Heart right ventricle (tissue), 16 donors: ENCODE measurements at regions of chr2 and their contacts with region 1.

Region 1: GRCh38 chr2:148172131-148172753 is 151.4 kb downstream of the MBD5 start:
- DNase-seq: no peak
- ATAC-seq: peak in 1 of 8 donors; percentile 44
- H3K4me3 ChIP-seq: no peak overlapping the region
- H3K27ac ChIP-seq: no peak overlapping the region
- H3K4me1 ChIP-seq: no peaks in the 10 kb centered on the region
- H3K27me3 ChIP-seq: no peaks in the 10 kb centered on the region
- CTCF ChIP-seq: no peak

Region 2: DNA sequence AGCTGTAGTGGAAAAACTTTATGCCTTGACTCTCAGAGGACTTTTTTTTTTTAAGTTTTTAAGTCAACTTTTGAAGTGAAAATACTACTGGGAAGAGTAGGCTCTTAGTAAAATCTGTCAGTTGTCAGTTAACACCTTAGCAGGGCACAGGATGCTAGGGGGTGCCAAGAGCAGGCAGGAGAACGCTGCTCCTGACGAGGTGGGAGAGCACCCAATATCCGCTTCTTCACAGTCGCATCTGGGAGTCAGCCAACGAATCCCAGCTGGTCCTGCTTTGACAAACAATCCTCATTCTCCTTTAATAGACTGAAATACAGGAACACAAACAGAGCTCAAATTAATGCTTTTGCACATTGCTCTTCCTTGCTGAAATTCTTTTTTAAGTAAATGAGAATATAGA is 1036.9 kb before region 1 on chr2:
- intact Hi-C with region 1: loop called in 1 of 10 experiments (anchors 5 kb)
- DNase-seq: no peak
- ATAC-seq: no peak
- H3K4me3 ChIP-seq: no peak overlapping the region
- H3K27ac ChIP-seq: no peak overlapping the region
- H3K4me1 ChIP-seq: no peaks in the 10 kb centered on the region
- H3K27me3 ChIP-seq: no peaks in the 10 kb centered on the region
- CTCF ChIP-seq: no peak

Region 3: DNA sequence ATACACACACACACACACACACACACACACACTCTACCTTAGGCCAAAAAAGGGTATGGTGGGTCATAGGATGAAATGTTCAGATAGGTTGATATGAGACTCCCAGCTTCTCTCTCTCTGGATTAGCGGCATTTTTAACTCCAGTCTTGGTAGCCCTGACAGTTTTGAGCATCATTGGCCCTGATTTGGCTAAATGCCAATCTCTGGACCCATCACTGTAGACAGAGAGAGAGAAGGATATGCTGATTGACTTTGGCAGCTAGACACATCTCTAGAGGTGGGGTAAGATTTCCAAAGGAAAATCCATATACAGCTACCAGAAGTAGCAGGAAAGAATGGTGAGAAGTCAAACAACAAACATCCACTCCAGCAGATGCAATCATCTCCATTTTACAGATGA is 157.8 kb after region 1 on chr2:
- intact Hi-C with region 1: no loop called
- DNase-seq: no peak
- ATAC-seq: no peak
- H3K4me3 ChIP-seq: no peak overlapping the region
- H3K27ac ChIP-seq: no peak overlapping the region
- H3K4me1 ChIP-seq: no peaks in the 10 kb centered on the region
- H3K27me3 ChIP-seq: no peaks in the 10 kb centered on the region
- CTCF ChIP-seq: no peak